ENCODE measurements at regions of chr11 and their contacts with region 1.

Region 1: DNA sequence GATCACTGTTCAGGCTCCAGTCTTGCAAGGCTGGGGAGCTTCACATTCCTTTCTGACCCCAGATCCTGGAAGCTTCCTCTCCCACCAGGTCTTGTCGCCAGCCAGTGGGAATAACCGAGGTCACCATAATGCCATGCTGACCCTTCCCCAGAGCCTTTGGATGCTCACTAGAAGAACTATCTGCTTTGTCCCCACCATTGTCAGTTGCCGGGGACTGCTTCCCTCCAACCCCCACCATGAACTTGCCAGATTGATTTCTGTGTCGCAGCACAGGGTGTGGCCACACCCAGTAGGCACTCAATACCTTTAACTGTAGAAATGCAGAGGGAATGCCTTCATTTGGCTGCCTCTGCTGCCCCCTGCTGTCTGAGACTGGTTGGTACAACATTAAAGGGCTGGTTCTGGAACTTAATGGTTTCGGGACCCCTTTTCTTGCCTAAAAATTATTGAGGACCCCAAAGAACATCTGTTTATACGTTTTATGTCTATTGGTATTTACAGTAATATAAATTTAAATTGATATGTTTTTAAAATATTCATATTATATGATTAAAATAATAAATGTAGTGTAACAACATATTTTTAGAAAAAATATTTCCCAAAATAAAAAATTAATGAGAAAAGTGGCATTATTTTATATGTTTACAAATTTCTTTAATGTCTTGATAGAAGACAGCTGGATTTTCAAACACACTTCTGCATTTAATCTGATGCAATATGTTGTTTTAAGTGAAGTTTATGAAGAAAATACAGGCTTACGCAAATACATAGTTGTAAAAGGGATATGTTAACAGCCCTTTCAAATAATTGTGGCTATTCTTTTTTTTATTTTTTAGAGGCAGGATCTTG is 6.7 kb upstream of the GDPD5 start:
- DNase-seq: no peak
- H3K4me3 ChIP-seq: no peak overlapping the region
- H3K27ac ChIP-seq: no peak overlapping the region
- H3K4me1 ChIP-seq: peaks cover 0 to 10% (median 6%) of the 10 kb centered on the region in 4 donors
- H3K27me3 ChIP-seq: no peaks in the 10 kb centered on the region
- CTCF ChIP-seq: peak; percentile 89 to 95 (median 89)
- EP300 ChIP-seq: no peak
- POLR2A ChIP-seq: no peak

Region 2: DNA sequence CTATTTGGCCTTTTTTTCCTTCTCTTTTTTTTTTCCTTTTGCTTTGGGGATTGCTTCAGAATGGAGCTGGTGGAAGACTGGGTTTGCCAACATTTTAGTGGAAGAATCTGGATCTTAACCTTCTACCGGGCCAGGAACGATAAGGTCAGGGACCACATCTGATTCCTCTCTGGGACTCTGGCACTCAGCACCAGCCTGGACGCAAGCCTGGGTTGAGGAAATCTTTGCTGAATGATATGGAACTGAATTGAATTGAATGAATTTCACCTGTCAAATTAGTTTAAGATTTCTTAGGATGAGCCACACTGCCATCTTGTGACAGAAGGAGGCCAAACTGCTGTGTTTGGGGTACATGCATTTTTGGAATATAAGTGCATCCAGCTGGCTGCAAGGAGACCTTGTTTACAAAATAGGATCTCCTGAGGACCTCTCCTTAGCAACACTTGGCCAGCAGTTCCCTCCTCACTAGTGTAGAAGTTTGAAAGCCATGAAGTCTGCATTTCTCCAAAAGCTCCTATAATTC is 261.5 kb before region 1 on chr11:
- intact Hi-C with region 1: loop called (anchors 10 kb)
- DNase-seq: no peak
- H3K4me3 ChIP-seq: no peak overlapping the region
- H3K27ac ChIP-seq: no peak overlapping the region
- H3K4me1 ChIP-seq: peaks cover 0 to 6% (median under 1%) of the 10 kb centered on the region in 4 donors
- H3K27me3 ChIP-seq: no peaks in the 10 kb centered on the region
- CTCF ChIP-seq: peak in 1 of 3 experiments; percentile 8
- EP300 ChIP-seq: no peak
- POLR2A ChIP-seq: no peak

Region 3: GRCh38 chr11:75388386-75389275 is 143.8 kb before region 1 on chr11:
- intact Hi-C with region 1: loop called (anchors 5 kb)
- DNase-seq: no peak
- H3K4me3 ChIP-seq: no peak overlapping the region
- H3K27ac ChIP-seq: no peak overlapping the region
- H3K4me1 ChIP-seq: peaks cover 12 to 20% (median 17%) of the 10 kb centered on the region in 4 donors
- H3K27me3 ChIP-seq: no peaks in the 10 kb centered on the region
- CTCF ChIP-seq: peak; percentile 75 to 86 (median 84)
- EP300 ChIP-seq: no peak
- POLR2A ChIP-seq: no peak

Region 4: DNA sequence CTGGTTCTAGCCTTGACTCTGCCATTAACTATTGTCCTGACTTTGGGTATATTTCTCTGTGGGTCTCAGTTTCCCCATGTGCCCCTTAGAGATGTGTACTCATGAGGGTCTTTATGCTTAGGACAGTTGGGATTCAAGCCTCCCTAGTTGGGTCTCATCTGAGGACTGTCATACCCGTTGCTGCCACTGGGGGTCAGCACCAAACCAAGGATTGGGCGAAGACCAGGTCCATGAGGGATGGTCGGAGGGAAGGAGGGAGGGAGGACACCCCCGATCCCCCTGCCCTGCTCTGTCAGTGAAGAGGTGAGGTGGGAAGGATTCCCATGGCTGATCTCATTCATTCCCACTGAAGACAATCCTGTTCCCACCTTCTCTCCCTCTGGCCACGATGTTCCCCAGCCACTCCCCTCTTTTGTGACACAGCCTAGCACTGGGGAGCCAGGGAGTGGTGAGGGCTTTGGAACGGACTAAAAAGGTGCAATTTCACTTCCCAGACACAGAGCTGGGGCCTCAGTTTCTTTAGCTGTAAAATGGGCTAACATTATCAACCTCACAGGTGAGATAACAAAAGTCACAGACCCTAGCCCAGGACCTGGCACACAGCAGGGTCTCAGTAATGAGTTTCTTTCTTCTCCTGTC is 87.0 kb before region 1 on chr11:
- intact Hi-C with region 1: loop called (anchors 1 kb)
- DNase-seq: peak; percentile 94
- H3K4me3 ChIP-seq: no peak overlapping the region
- H3K27ac ChIP-seq: no peak overlapping the region
- H3K4me1 ChIP-seq: peaks cover 0 to 13% (median 6%) of the 10 kb centered on the region in 4 donors
- H3K27me3 ChIP-seq: no peaks in the 10 kb centered on the region
- CTCF ChIP-seq: peak; percentile 94 to 97 (median 96)
- EP300 ChIP-seq: no peak
- POLR2A ChIP-seq: no peak